Common myeloid progenitor, CD34-positive (primary cell): ENCODE measurements at regions of chr6 and their contacts with region 1.

Region 1: DNA sequence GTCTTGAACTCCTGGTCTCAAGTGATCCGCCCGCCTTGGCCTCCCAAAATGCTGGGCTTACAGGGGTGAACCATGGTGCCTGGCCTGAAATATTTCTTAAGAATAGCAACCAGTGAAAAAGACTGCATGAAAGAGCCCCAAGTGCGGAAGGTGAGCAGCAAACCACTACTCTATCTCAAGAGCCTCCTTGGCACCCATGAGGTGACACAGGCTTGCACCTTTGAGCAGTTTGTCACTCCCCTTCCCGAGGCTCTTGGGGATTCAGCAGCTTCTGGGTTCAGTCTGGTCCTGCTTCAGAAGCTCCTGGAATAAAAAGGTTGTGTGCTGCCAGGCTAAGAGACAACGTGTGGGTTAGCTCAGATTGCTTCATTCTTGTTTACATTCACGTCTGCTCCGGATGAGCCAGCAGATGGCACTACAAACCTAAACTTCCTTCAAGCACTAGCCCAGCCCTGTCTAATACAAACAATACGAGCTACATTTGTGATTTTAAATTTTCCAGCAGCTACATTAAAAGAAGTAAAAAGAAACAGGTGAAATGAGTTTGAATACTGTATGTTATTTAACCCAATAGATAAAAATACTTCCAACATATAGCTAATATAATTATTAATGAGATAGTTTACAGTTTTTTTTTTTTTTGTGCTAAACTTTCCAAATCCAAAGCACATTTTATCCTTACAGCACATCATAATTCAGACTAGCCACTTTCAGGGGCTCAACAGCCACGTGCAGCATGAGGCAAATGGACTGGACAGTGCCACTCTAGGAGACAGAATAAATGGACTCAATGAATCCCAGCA is 46.2 kb downstream of the GJA10 start:
- DNase-seq: peak; percentile 76 to 90 (median 86)
- H3K4me3 ChIP-seq: no peak overlapping the region
- H3K27ac ChIP-seq: no peak overlapping the region
- H3K4me1 ChIP-seq: no peaks in the 10 kb centered on the region
- H3K27me3 ChIP-seq: no peaks in the 10 kb centered on the region

Region 2: DNA sequence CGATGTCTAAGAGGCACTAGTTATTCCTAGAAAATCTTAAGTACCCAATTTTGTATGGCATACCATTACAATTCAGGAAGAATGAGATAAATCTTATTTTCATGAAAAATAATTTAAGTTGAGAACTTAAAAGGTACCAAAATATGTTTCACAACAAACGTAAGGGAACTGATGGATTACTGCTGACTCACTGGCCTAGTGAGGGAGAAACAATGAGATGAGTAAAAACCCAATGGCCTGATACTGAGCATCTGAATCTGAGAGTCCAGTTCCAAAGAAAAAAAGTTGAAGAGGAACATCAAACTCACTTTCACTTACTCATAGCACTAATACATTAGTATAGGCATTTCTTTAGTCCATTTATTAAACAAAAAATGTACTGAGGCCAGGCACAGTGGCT is 176.9 kb before region 1 on chr6:
- CTCF ChIA-PET with region 1: no interaction called
- POLR2A ChIA-PET with region 1: no interaction called
- DNase-seq: peak in 1 of 3 donors; percentile 2
- H3K4me3 ChIP-seq: no peak overlapping the region
- H3K27ac ChIP-seq: no peak overlapping the region
- H3K4me1 ChIP-seq: no peaks in the 10 kb centered on the region
- H3K27me3 ChIP-seq: no peaks in the 10 kb centered on the region

Region 3: GRCh38 chr6:89797317-89797716 is 143.1 kb before region 1 on chr6:
- CTCF ChIA-PET with region 1: no interaction called
- POLR2A ChIA-PET with region 1: no interaction called
- DNase-seq: peak; percentile 39 to 79 (median 75)
- H3K4me3 ChIP-seq: no peak overlapping the region
- H3K27ac ChIP-seq: no peak overlapping the region
- H3K4me1 ChIP-seq: peaks cover 6 to 27% (median 20%) of the 10 kb centered on the region in 4 experiments
- H3K27me3 ChIP-seq: no peaks in the 10 kb centered on the region

Region 4: GRCh38 chr6:89862273-89862672 is 78.2 kb before region 1 on chr6:
- CTCF ChIA-PET with region 1: no interaction called
- POLR2A ChIA-PET with region 1: no interaction called
- DNase-seq: no peak
- H3K4me3 ChIP-seq: no peak overlapping the region
- H3K27ac ChIP-seq: no peak overlapping the region
- H3K4me1 ChIP-seq: no peaks in the 10 kb centered on the region
- H3K27me3 ChIP-seq: no peaks in the 10 kb centered on the region

Region 5: GRCh38 chr6:89951574-89952104 is 11.2 kb after region 1 on chr6:
- CTCF ChIA-PET with region 1: interaction called, 13 read pairs
- POLR2A ChIA-PET with region 1: no interaction called
- DNase-seq: no peak
- H3K4me3 ChIP-seq: no peak overlapping the region
- H3K27ac ChIP-seq: no peak overlapping the region
- H3K4me1 ChIP-seq: peaks cover 16 to 26% (median 18%) of the 10 kb centered on the region in 4 experiments
- H3K27me3 ChIP-seq: peaks cover 0 to 2% (median 0%) of the 10 kb centered on the region in 5 experiments

Region 6: DNA sequence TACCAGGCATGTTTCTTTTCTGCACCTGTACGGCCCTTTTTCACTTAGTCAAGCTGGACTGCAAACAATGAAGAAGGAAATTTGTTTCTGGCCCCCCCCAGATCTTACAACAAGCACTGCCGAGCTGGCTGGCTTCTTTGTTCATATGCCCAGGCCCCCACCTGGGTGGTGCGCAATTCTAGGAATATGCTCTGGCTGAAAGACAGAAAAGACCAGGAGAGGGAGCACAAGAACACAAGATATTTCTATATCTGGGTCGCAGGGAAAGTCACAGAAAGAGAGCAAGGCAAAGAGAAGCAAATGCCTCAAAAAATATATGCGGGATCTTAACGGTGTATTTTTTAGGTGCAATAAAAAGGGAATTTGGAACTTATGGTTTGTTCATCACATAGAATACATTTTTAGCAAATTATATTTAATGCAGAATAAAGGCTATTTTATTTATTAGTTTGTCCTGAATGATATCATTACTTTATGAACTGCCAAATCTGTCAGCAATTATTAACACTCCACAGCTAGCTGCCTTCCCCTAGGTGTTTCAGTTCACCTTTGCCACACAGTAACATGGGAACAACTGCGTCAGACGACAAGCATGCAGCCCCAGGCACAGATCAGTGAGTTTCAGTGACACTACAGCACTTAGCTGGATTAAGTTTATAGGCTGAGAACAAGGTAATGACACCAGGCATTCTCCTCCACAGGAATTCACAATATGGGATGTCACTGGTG is 30.3 kb after region 1 on chr6:
- CTCF ChIA-PET with region 1: interaction called, 11 read pairs
- POLR2A ChIA-PET with region 1: no interaction called
- DNase-seq: peak; percentile 62 to 74 (median 72)
- H3K4me3 ChIP-seq: no peak overlapping the region
- H3K27ac ChIP-seq: no peak overlapping the region
- H3K4me1 ChIP-seq: no peaks in the 10 kb centered on the region
- H3K27me3 ChIP-seq: no peaks in the 10 kb centered on the region

Region 7: GRCh38 chr6:90080876-90081481 is 140.6 kb after region 1 on chr6:
- CTCF ChIA-PET with region 1: no interaction called
- POLR2A ChIA-PET with region 1: no interaction called
- DNase-seq: no peak
- H3K4me3 ChIP-seq: no peak overlapping the region
- H3K27ac ChIP-seq: no peak overlapping the region
- H3K4me1 ChIP-seq: peaks cover 3 to 17% (median 10%) of the 10 kb centered on the region in 4 experiments
- H3K27me3 ChIP-seq: no peaks in the 10 kb centered on the region

Region 8: DNA sequence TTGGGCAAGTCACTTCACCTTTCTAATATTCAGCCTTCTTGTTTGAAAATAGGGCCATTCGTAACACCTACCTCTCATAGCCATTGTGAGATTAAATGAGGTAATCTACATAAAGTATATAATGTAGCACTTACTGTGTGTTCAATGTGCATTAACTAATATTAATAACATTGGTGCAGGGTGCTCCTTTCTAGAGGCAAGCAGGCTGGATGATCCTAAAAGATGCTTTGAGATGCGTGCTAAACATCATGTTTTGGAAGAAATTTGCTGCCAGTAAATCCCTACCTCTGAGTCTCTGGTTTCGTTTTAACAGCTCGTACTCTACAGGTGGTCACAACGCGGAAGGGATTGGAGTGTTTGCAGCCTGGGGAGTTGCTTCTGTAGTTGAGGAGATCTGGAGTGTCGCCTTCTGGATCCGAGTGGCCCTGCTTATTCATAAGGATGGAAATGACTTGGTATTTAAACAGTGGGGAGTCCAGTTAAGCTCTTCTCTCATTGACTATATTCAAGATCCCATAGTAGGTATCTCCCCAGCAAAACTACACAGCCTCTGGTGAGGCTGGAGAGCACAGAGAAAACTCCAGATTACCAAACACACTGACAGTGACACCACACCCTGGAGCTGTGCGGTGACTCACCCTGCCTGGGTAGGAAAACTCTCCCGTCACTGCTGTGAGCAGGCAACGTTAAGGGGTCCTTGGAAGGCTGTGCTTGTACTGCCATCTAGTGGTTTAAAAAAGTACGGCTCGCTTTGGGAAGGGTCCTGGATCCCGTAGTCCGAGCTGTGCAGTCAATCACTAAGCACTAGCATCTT is 538.6 kb after region 1 on chr6:
- CTCF ChIA-PET with region 1: interaction called, 153 read pairs
- POLR2A ChIA-PET with region 1: interaction called, 3 read pairs
- DNase-seq: peak; percentile 90 to 95 (median 94)
- H3K4me3 ChIP-seq: no peak overlapping the region
- H3K27ac ChIP-seq: no peak overlapping the region
- H3K4me1 ChIP-seq: peaks cover 0 to 7% (median 4%) of the 10 kb centered on the region in 4 experiments
- H3K27me3 ChIP-seq: no peaks in the 10 kb centered on the region